OCI-LY7 (cell line): ENCODE measurements at regions of chr1 and their contacts with region 1.

Region 1: GRCh38 chr1:201511941-201512539 is 5.1 kb upstream of the CSRP1 start:
- DNase-seq: peak; percentile 62
- H3K4me3 ChIP-seq: peak overlapping the region; percentile 46
- H3K27ac ChIP-seq: peak overlapping the region; percentile 58
- H3K4me1 ChIP-seq: peaks cover 59% of the 10 kb centered on the region
- CTCF ChIP-seq: no peak

Region 2: GRCh38 chr1:201385299-201385891 is 126.6 kb before region 1 on chr1:
- CTCF ChIA-PET with region 1: no interaction called
- POLR2A ChIA-PET with region 1: no interaction called
- intact Hi-C with region 1: loop called (anchors 1 kb)
- DNase-seq: peak; percentile 63
- H3K4me3 ChIP-seq: no peak overlapping the region
- H3K27ac ChIP-seq: no peak overlapping the region
- H3K4me1 ChIP-seq: no peaks in the 10 kb centered on the region
- CTCF ChIP-seq: peak; percentile 89

Region 3: GRCh38 chr1:201500670-201501120 is 11.3 kb before region 1 on chr1:
- CTCF ChIA-PET with region 1: interaction called, 24 read pairs
- POLR2A ChIA-PET with region 1: interaction called, 32 read pairs
- intact Hi-C with region 1: no loop called
- DNase-seq: no peak
- H3K4me3 ChIP-seq: no peak overlapping the region
- H3K27ac ChIP-seq: no peak overlapping the region
- H3K4me1 ChIP-seq: peaks cover 38% of the 10 kb centered on the region
- CTCF ChIP-seq: no peak